Kidney (tissue), 22 donors: ENCODE measurements at regions of chr4 and their contacts with region 1.

Region 1: DNA sequence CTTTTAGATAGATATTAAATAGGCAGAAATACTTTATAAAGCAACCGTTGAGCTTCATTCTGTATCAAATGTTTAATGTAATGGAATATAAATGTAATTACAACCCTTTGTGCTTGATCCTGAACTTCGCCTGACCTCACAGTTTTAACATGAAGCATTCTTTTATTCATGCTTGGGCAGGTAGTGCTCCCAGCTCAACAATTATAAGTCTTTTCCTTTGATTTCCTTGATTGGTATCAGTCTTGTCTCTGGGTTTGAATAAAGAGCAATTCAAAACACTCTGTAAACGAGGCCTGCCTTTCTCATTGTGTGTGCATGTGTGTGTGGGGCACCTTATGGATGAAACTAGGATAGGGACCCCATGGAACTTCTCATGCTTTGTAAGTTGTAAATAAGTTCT is 6.8 kb downstream of the METAP1 start:
- DNase-seq: peak in 2 of 5 donors; percentile 25 to 39
- H3K4me3 ChIP-seq: no peak overlapping the region
- H3K27ac ChIP-seq: peak overlapping the region in 1 of 2 donors; percentile 24
- H3K4me1 ChIP-seq: peaks cover 0 to 7% (median 3%) of the 10 kb centered on the region in 3 donors
- H3K27me3 ChIP-seq: no peaks in the 10 kb centered on the region
- CTCF ChIP-seq: no peak

Region 2: DNA sequence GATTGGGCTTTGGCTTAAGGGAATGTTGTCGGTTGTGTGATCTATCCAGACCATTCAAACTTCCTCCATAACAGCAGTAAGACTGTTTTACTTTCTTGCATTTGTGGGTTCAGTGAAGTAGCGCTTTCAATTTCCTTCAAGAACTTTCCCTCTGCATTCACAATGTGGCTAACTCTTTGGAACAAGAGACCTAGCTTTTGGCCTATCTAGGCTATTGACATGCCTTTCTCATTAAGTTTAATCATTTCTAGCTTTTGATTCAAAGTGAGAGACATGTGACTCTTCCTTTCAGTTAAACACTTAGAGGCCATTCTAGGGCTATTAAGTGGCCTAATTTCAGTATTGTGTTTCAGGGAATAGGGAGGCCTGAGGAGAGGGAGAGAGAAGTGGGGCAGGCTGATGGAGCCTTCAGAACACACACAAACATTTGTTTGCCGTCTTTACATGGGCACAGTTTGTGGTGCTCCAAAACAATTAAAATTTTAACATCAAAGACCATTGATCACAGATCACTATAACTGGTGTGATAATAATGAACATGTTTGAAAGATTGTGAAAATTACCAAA is 52.2 kb after region 1 on chr4:
- intact Hi-C with region 1: loop called (anchors 10 kb)
- DNase-seq: peak in 1 of 5 donors; percentile 25
- H3K4me3 ChIP-seq: no peak overlapping the region
- H3K27ac ChIP-seq: no peak overlapping the region
- H3K4me1 ChIP-seq: peaks cover 0 to 8% (median 0%) of the 10 kb centered on the region in 3 donors
- H3K27me3 ChIP-seq: no peaks in the 10 kb centered on the region
- CTCF ChIP-seq: no peak